ENCODE measurements at regions of chr17 and their contacts with region 1.

Region 1: GRCh38 chr17:47802341-47803022 is 19.1 kb downstream of the OSBPL7 start:
- DNase-seq: peak; percentile 33
- H3K4me3 Mint-ChIP-seq: no peak overlapping the region
- H3K27ac Mint-ChIP-seq: no peak overlapping the region
- H3K4me1 Mint-ChIP-seq: peaks cover 6% of the 10 kb centered on the region
- H3K27me3 Mint-ChIP-seq: peaks cover 7% of the 10 kb centered on the region

Region 2: DNA sequence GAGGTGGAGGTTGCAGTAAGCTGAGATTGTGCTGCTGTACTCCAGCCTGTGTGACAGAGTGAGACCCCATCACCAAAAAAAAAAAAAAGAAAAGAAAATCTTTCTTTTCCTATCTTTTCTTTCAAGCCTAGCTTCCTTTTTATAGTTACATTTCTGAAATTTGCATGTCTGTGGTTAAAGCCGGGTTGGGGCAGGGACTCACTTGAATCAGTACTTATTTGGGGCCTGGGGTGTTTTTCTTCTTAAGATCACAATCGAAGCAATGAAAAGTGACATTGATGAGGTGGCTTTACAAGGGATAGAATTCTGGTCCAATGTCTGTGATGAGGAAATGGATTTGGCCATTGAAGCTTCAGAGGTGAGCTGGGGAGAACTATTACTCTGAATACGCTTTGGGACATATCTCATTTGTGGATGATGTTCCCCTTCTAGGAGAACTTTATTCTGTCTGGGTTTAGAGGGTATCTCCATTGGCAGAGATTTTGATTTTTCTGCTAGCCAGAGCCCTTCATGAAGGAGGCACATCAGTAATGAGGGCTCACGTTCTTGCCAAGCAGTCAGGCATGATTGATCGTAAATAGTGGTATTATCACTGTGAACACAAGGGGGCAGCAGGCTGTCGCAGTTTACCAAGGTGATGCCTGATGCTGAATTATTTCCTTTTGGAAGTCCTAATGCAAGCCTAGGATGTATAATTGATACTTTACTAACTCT is 138.4 kb before region 1 on chr17:
- intact Hi-C with region 1: loop called (anchors 1 kb)
- DNase-seq: peak; percentile 43
- H3K4me3 Mint-ChIP-seq: peak overlapping the region; percentile 30
- H3K27ac Mint-ChIP-seq: peak overlapping the region; percentile 70
- H3K4me1 Mint-ChIP-seq: peaks cover 38% of the 10 kb centered on the region
- H3K27me3 Mint-ChIP-seq: no peaks in the 10 kb centered on the region